ENCODE measurements at regions of chr2 and their contacts with region 1.

Region 1: DNA sequence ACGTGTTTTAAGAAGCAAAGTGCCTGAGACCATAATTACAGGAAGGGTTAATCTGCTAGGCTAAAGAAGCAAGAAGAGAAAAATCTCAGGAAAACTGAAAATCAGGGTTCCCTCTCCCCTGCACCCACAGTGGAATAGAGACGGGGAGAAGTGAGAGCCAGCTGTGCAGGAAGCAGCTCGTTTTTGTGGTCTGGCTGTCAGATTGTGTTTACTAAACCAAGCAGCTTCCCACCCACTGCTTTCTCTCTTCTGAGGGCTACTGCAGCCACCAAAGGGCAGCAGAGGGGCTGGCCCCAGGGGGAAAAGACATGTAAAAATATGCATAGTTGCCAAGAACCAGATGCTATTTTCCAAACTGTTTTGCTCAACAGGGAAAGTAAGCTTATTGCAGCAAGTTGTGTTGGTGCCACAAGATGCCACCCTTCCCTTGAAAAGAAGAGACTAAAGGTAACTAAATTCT is 72.6 kb upstream of the THUMPD2 start:
- DNase-seq: peak; percentile 34
- CTCF ChIP-seq: no peak

Region 2: GRCh38 chr2:39837856-39838453 is 13.7 kb before region 1 on chr2:
- CTCF ChIA-PET with region 1: interaction called, 29 read pairs
- POLR2A ChIA-PET with region 1: no interaction called
- DNase-seq: peak; percentile 41
- CTCF ChIP-seq: peak; percentile 76

Measured in GM10248 (cell line).